ENCODE measurements at regions of chr2 and their contacts with region 1.

Region 1: GRCh38 chr2:210523650-210524289 is 32.6 kb upstream of the CPS1 start:
- DNase-seq: no peak
- ATAC-seq: no peak
- H3K4me3 ChIP-seq: no peak overlapping the region
- H3K27ac ChIP-seq: no peak overlapping the region
- H3K4me1 ChIP-seq: no peaks in the 10 kb centered on the region
- CTCF ChIP-seq: no peak
- EP300 ChIP-seq: no peak
- POLR2A ChIP-seq: no peak
- RAD21 ChIP-seq: no peak

Region 2: GRCh38 chr2:210503001-210503623 is 20.7 kb before region 1 on chr2:
- CTCF ChIA-PET with region 1: interaction called, 10 read pairs
- POLR2A ChIA-PET with region 1: no interaction called
- DNase-seq: peak; percentile 38 to 64
- ATAC-seq: peak; percentile 90 to 94
- H3K4me3 ChIP-seq: peak overlapping the region; percentile 35
- H3K27ac ChIP-seq: peak overlapping the region in 1 of 2 experiments; percentile 59; a peak in 2 of 6 replicates
- H3K4me1 ChIP-seq: peaks cover 7% of the 10 kb centered on the region; the same call in 1 of the 3 replicates
- CTCF ChIP-seq: peak; percentile 87
- EP300 ChIP-seq: no peak
- POLR2A ChIP-seq: no peak
- RAD21 ChIP-seq: peak; percentile 62 to 68